ENCODE measurements at regions of chr3 and their contacts with region 1.

Region 1: GRCh38 chr3:83769791-83770646 is 1188.8 kb upstream of the CADM2 start:
- DNase-seq: no peak
- ATAC-seq: no peak
- H3K4me3 ChIP-seq: no peak overlapping the region
- H3K27ac ChIP-seq: no peak overlapping the region
- H3K4me1 ChIP-seq: no peaks in the 10 kb centered on the region
- H3K27me3 ChIP-seq: no peaks in the 10 kb centered on the region
- CTCF ChIP-seq: no peak
- EP300 ChIP-seq: no peak
- POLR2A ChIP-seq: no peak
- RAD21 ChIP-seq: no peak

Region 2: GRCh38 chr3:83835037-83835436 is 65.0 kb after region 1 on chr3:
- CTCF ChIA-PET with region 1: no interaction called
- POLR2A ChIA-PET with region 1: no interaction called
- RAD21 ChIA-PET with region 1: no interaction called
- SMC1A ChIA-PET with region 1: no interaction called
- in situ Hi-C with region 1: no loop called
- intact Hi-C with region 1: loop called (anchors 10 kb)
- DNase-seq: no peak
- ATAC-seq: no peak
- H3K4me3 ChIP-seq: no peak overlapping the region
- H3K27ac ChIP-seq: no peak overlapping the region
- H3K4me1 ChIP-seq: no peaks in the 10 kb centered on the region
- H3K27me3 ChIP-seq: no peaks in the 10 kb centered on the region
- CTCF ChIP-seq: no peak
- EP300 ChIP-seq: no peak
- POLR2A ChIP-seq: no peak
- RAD21 ChIP-seq: no peak

Region 3: DNA sequence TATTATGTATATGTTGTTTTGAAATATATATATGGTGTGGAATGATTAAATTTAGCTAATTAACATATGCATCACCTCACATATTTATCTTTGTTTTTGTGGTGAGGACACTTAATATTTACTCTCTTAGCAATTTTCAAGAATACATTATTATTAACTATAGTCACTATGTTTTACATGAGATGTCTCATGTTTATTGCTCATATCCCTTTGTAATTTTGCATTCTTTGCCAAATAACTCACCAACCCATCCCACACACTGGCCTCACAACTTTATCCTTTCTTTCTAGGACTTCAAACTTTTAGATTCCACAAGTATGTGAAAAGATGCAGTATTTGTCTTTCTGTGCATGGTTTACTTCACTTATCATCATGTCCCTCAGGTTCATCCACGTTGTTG is 238.6 kb after region 1 on chr3:
- CTCF ChIA-PET with region 1: no interaction called
- POLR2A ChIA-PET with region 1: no interaction called
- RAD21 ChIA-PET with region 1: no interaction called
- SMC1A ChIA-PET with region 1: no interaction called
- in situ Hi-C with region 1: no loop called
- intact Hi-C with region 1: no loop called
- DNase-seq: no peak
- ATAC-seq: no peak
- H3K4me3 ChIP-seq: no peak overlapping the region
- H3K27ac ChIP-seq: no peak overlapping the region
- H3K4me1 ChIP-seq: no peaks in the 10 kb centered on the region
- H3K27me3 ChIP-seq: no peaks in the 10 kb centered on the region
- CTCF ChIP-seq: no peak
- EP300 ChIP-seq: no peak
- POLR2A ChIP-seq: no peak
- RAD21 ChIP-seq: no peak